GM12878 (cell line): ENCODE measurements at regions of chr4 and their contacts with region 1.

Region 1: DNA sequence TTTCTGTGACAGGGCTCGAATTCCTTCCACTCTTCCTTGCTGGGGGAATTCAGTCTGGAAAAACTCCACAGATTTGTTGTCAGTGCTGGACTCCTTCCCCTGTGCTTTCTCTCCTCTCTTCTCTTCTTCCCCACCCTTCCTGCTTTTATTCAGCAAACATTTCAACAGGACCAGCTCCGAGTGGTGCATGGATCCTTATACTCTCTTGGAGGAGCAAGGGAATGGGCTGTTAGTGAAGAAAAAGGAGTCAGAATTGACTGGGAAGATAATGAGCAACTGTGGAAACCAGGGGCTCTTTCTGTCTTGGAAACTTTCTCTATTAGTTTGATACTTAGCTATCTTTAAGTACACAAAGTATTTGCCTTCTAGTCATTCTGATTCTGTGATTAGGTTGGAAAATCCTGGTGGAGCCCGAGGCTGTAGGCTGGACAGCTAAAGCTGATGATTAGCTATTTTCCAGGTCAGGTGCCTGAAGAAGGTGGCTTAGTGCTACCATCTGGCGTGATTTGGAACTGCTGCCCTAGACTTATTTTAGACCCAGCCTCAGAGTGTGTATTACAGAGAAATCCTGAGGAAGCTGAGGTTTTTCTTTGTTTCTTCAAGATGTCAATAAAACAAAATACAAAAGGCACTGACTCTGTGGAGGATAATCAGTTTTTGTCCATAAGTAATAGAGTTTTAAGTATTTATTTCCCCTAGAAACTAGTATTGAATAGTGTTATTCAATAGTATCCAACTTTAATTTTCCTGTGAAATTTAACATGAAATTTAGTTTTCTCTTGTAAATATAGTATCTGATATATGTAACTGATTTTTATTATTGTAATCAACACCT is 38.4 kb downstream of the NAP1L5 start:
- DNase-seq: peak; percentile 9
- ATAC-seq: peak; percentile 95
- H3K4me3 ChIP-seq: no peak overlapping the region
- H3K27ac ChIP-seq: no peak overlapping the region
- H3K4me1 ChIP-seq: no peaks in the 10 kb centered on the region
- H3K27me3 ChIP-seq: no peaks in the 10 kb centered on the region
- CTCF ChIP-seq: peak; percentile 70 to 83 (median 73)
- EP300 ChIP-seq: no peak
- POLR2A ChIP-seq: no peak
- RAD21 ChIP-seq: peak; percentile 80

Region 2: DNA sequence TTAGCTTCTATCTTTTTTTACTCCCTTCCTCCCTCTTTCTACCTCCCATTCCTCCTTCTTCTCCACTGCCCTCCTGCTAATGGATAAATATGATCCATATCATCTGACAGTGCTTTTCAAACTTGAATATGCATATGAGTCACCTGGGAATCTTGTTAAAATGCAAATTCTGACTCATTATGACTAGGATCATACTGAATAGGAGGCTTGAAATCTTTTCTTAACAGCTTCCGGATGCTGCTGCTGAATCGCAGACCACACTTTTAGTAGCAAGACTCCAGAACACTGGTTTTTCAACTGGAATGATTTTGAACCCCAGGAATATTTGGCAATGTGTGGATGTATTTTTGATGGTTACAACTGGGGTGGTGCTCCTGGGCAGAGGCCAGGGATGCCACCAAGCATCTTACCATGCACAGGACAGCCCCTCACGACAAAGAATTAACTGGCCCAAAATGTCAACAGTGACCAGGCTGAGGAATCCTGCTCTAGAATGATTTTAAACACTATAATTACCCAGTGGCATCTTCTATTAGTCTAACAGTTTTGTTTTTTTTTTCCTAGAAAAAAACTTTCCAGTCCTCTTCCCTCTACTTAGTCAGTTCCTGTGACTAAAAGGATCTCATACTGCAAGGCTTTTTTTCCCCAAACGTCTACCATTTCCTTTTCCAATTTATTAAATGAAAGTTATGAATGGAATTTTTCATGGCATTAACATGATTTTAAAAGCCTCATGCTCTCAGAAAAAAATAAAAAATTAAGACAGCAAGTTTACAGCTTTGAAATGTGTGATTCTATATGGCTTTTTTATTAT is 125.1 kb before region 1 on chr4:
- CTCF ChIA-PET with region 1: interaction called, 64 read pairs
- POLR2A ChIA-PET with region 1: no interaction called
- RAD21 ChIA-PET with region 1: interaction called, 25 read pairs
- SMC1A ChIA-PET with region 1: interaction called, 30 read pairs
- in situ Hi-C with region 1: loop called (anchors 5 kb)
- intact Hi-C with region 1: loop called (anchors 1 kb)
- DNase-seq: no peak
- ATAC-seq: no peak
- H3K4me3 ChIP-seq: no peak overlapping the region
- H3K27ac ChIP-seq: no peak overlapping the region
- H3K4me1 ChIP-seq: no peaks in the 10 kb centered on the region
- H3K27me3 ChIP-seq: no peaks in the 10 kb centered on the region
- CTCF ChIP-seq: no peak
- EP300 ChIP-seq: no peak
- POLR2A ChIP-seq: no peak
- RAD21 ChIP-seq: no peak

Region 3: GRCh38 chr4:88591787-88592599 is 67.3 kb before region 1 on chr4 and contains the start of gene HERC3:
- CTCF ChIA-PET with region 1: interaction called, 11 read pairs
- POLR2A ChIA-PET with region 1: no interaction called
- RAD21 ChIA-PET with region 1: interaction called, 4 read pairs
- SMC1A ChIA-PET with region 1: interaction called, 3 read pairs
- in situ Hi-C with region 1: no loop called
- intact Hi-C with region 1: no loop called
- DNase-seq: peak; percentile 46
- ATAC-seq: peak; percentile 99
- H3K4me3 ChIP-seq: peak within 1 kb of the TSS; percentile 88
- H3K27ac ChIP-seq: no peak within 1 kb of the TSS
- H3K4me1 ChIP-seq: no peaks in the 10 kb centered on the region
- H3K27me3 ChIP-seq: no peaks in the 10 kb centered on the region
- CTCF ChIP-seq: 0 out of 6 replicates have a peak, but pooled peaks of 1 of the 3 experiments have one; percentile 3
- EP300 ChIP-seq: no peak
- POLR2A ChIP-seq: peak; percentile 63
- RAD21 ChIP-seq: no peak
- polyA plus RNA-seq, gene HERC3: 0.52 to 0.82 TPM

Region 4: DNA sequence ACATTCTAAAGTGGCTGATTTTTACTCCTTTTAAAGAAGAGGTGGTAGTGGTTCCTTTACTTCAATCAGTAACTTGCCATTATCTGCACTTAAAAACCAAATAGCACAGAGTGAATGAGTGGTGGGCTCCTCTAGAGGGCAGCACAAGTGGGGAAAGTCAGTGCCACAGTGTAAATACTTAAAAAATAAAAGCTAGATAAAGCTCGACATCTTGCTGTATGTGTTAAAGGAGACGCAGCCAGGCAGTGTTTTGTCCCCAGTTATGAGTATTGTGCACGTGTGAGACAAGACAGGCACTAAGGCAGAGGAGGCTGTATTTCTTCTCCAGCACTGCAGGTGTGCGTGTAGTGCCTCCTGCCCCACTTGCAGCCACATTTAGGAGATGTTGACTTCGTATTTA is 13.7 kb after region 1 on chr4:
- CTCF ChIA-PET with region 1: interaction called, 10 read pairs
- POLR2A ChIA-PET with region 1: no interaction called
- RAD21 ChIA-PET with region 1: interaction called, 3 read pairs
- SMC1A ChIA-PET with region 1: interaction called, 6 read pairs
- in situ Hi-C with region 1: no loop called
- intact Hi-C with region 1: no loop called
- DNase-seq: no peak
- ATAC-seq: peak; percentile 91
- H3K4me3 ChIP-seq: no peak overlapping the region
- H3K27ac ChIP-seq: no peak overlapping the region
- H3K4me1 ChIP-seq: no peaks in the 10 kb centered on the region
- H3K27me3 ChIP-seq: no peaks in the 10 kb centered on the region
- CTCF ChIP-seq: peak; percentile 50 to 67 (median 64)
- EP300 ChIP-seq: no peak
- POLR2A ChIP-seq: no peak
- RAD21 ChIP-seq: peak; percentile 51